Tibial artery (tissue), 4 donors: ENCODE measurements at regions of chr14 and their contacts with region 1.

Region 1: GRCh38 chr14:49767562-49768300 is at the start of gene KLHDC2:
- DNase-seq: peak; percentile 84 to 94
- H3K4me3 ChIP-seq: peak within 1 kb of the TSS; percentile 88 to 96
- H3K27ac ChIP-seq: peak within 1 kb of the TSS; percentile 94 to 98
- H3K4me1 ChIP-seq: peaks cover 0 to 29% (median 23%) of the 10 kb centered on the region in 4 donors
- H3K27me3 ChIP-seq: no peaks in the 10 kb centered on the region
- CTCF ChIP-seq: peak; percentile 11 to 24

Region 2: GRCh38 chr14:49670475-49670874 is 97.3 kb before region 1 on chr14:
- intact Hi-C with region 1: no loop called
- DNase-seq: no peak
- H3K4me3 ChIP-seq: no peak overlapping the region
- H3K27ac ChIP-seq: no peak overlapping the region
- H3K4me1 ChIP-seq: no peaks in the 10 kb centered on the region
- H3K27me3 ChIP-seq: no peaks in the 10 kb centered on the region
- CTCF ChIP-seq: no peak

Region 3: DNA sequence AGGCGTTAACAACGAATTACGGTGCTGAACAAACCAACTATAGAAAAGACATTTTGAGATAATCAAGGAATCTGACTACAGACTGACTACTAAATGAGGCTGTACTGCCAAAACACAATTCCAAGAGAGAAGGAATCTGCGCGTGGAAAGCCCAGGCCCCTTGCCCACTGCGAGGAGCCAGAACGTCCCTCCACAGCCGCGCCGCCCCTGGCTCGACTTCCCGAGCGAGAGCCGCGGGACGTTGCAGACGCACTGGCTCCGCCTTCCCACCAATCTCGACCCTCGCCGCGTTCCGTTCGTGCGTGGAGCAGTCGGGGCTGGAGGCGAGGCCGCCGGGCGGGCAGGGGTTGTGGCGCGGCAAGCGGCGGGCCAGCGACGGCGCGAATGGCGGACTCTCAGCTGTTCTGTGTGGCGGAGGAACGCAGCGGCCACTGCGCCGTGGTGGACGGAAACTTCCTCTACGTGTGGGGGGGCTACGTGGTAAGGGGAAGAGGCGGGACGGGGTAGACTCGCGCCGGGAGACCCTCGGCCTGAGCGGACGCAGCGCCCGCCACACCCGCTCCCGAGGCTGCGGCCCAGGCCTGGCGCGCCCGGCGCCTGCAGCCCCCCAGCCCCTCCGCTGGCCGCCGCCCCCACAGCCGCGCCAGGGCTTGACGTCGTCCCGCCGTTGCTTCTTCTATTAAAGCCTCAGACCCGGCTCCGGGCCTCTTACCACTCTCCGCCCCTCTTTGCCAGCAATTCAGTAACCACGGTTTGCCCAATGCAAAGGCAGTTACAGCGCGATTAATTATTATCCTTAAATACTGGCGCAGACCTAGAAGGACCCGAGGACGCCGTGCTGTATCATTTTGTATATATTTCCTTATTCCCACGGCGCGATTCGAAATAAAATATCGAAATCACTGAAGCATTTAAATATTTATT is 74.7 kb before region 1 on chr14 and contains the start of gene KLHDC1:
- intact Hi-C with region 1: loop called (anchors 5 kb)
- DNase-seq: peak; percentile 88 to 94
- H3K4me3 ChIP-seq: peak within 1 kb of the TSS; percentile 68 to 89
- H3K27ac ChIP-seq: peak within 1 kb of the TSS; percentile 87 to 98
- H3K4me1 ChIP-seq: peaks cover 0 to 23% (median 10%) of the 10 kb centered on the region in 4 donors
- H3K27me3 ChIP-seq: no peaks in the 10 kb centered on the region
- CTCF ChIP-seq: no peak

Region 4: DNA sequence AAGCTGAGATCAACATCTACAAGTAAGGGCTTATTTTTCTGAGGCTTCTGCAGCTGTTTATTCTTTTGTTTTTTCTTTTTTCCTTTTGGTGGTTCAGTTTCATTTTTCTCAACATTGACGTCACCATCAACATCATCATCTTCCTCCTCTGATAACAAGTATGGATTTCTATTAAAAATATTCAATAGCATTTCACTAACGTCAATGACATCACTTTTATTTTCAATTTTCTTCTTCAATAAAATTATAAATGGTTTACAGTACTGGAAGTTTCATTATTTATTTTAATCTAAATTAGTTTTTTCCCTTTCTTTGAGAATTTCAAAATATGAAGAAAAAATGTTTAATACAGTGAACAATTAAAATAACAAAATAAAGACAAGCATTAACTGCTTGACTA is 60.9 kb after region 1 on chr14:
- intact Hi-C with region 1: loop called (anchors 10 kb)
- DNase-seq: no peak
- H3K4me3 ChIP-seq: no peak overlapping the region
- H3K27ac ChIP-seq: no peak overlapping the region
- H3K4me1 ChIP-seq: no peaks in the 10 kb centered on the region
- H3K27me3 ChIP-seq: no peaks in the 10 kb centered on the region
- CTCF ChIP-seq: no peak

Region 5: GRCh38 chr14:51129130-51129529 is 1361.4 kb after region 1 on chr14:
- intact Hi-C with region 1: no loop called
- DNase-seq: no peak
- H3K4me3 ChIP-seq: no peak overlapping the region
- H3K27ac ChIP-seq: no peak overlapping the region
- H3K4me1 ChIP-seq: no peaks in the 10 kb centered on the region
- H3K27me3 ChIP-seq: no peaks in the 10 kb centered on the region
- CTCF ChIP-seq: no peak